AG04449 (cell line): ENCODE measurements at regions of chr7 and their contacts with region 1.

Region 1: GRCh38 chr7:1044191-1045068 is at the start of gene GPR146:
- DNase-seq: peak; percentile 71
- H3K4me3 ChIP-seq: peak within 1 kb of the TSS; percentile 71
- CTCF ChIP-seq: peak; percentile 78

Region 2: DNA sequence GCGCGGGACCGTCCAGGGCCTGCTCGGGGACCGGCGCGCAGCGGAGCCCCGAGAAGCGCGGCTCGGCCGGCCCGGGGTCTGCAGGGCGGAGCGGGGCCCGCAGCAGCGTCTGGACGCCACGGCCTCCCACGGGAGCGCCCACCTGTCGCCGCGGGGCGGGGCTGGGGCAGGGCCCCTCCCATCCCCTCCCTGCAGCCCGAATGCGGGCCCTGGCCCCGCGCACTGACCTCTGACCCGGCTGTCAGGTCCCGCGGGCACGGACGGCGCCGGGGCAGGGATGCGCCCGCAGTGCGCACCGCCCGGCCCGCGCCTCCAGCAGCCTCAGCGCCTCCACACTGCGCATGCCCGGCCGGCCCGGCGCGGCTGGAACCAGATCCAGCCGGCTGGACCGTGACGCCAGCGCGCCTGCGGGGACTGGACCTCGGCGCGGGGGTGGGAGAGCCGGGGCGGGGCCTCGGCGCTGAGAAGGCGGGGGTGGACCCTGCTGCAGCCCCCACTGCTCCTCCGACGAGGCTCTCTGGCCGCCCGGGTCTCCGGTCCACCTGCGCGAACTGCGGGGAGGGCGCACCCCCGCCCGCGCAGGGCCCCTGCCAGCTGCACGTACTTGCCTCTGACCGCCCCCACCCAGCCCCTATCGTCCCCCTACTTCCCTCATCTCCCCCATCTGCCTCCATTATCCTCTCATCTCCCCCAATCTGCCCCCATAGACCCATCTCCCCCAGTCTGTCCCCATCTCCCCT is 16.2 kb before region 1 on chr7:
- CTCF ChIA-PET with region 1: interaction called, 10 read pairs
- POLR2A ChIA-PET with region 1: no interaction called
- DNase-seq: no peak
- H3K4me3 ChIP-seq: peak overlapping the region; percentile 67
- CTCF ChIP-seq: no peak

Region 3: GRCh38 chr7:1059200-1060091 is 15.0 kb after region 1 on chr7:
- CTCF ChIA-PET with region 1: interaction called, 51 read pairs
- POLR2A ChIA-PET with region 1: no interaction called
- DNase-seq: no peak
- H3K4me3 ChIP-seq: no peak overlapping the region
- CTCF ChIP-seq: no peak

Region 4: GRCh38 chr7:1275451-1276381 is 231.3 kb after region 1 on chr7:
- CTCF ChIA-PET with region 1: no interaction called
- POLR2A ChIA-PET with region 1: no interaction called
- DNase-seq: no peak
- H3K4me3 ChIP-seq: no peak overlapping the region
- CTCF ChIP-seq: no peak